ENCODE measurements at regions of chr1 and their contacts with region 1.

Region 1: DNA sequence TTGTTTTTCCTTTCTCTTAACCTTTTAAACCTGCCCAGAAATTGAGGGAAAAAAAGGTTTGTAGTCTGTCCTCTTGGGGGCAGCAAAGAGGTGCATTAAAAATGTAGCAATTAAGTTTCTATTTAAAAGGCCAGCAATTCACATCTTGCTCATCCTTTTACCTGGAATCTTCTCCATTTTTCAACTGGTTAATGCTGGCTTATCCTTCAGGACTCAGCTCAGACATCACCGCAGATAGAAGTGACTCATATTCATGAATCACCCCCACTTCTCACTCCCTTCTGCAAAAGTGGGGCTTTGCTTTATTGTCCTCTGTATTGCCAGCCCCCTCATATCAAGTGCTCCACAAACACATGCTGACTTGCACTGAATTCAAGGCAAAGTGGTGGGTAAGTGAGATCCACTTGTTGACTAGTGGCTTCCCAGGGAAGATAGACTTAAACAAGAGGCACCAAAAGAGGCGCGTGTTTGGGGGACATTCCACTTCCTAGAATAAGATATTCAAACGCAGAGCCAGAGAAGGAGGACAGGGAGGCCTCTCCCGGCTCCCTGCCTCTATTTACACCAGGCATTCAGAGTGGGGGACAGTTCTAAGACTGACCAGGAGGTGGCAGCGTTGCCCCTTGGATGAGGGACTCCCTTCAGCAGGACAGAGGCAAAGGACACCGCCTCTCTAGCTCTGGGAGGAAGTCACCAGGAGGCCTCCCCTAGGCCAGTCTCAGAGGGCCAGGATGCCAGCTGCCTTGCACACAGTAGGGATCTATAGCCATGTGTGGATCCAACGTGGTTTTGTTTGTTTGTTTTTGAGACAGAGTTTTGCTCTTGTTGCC is 23.2 kb upstream of the ZNF648 start:
- DNase-seq: peak; percentile 90 to 92
- H3K4me3 ChIP-seq: no peak overlapping the region
- H3K27ac ChIP-seq: no peak overlapping the region
- H3K4me1 ChIP-seq: peaks cover 0 to 8% (median 2%) of the 10 kb centered on the region in 4 donors
- H3K27me3 ChIP-seq: no peaks in the 10 kb centered on the region
- CTCF ChIP-seq: peak; percentile 81 to 85

Region 2: DNA sequence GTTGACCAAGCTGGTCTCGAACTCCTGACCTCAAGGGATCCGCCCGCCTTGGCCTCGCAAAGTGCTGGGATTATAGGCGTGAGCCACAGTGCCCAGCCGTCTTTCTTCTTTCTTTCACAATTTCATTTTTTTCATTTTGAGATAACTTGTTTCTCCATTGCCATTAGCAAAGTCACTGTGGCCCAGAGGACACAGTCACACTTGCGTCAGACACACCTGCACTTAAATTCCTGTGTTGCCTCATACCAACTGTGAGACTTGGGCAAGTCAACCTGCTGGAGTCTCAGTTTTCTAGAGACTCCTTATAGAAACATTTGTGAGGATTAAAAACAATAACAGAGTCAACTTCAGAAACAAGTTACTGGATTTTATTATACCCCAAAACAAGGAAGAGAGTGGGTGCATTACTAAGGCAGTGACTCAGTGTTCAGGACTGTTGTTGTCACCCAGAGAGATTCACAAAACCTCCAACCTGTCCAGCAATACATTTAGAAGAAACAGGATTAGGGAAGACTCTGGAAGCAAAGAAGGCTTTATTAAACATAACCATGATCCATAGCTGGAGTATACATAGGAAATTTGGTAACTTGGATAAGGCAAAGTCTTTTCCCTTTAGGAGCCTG is 313.2 kb after region 1 on chr1:
- intact Hi-C with region 1: loop called (anchors 2 kb)
- DNase-seq: no peak
- H3K4me3 ChIP-seq: no peak overlapping the region
- H3K27ac ChIP-seq: no peak overlapping the region
- H3K4me1 ChIP-seq: peaks cover 0 to 19% (median 12%) of the 10 kb centered on the region in 4 donors
- H3K27me3 ChIP-seq: no peaks in the 10 kb centered on the region
- CTCF ChIP-seq: no peak

Region 3: GRCh38 chr1:182588500-182589452 is 504.1 kb after region 1 on chr1 and contains the start of gene RNASEL:
- intact Hi-C with region 1: loop called (anchors 10 kb)
- DNase-seq: peak; percentile 70 to 87
- H3K4me3 ChIP-seq: peak within 1 kb of the TSS; percentile 56 to 75
- H3K27ac ChIP-seq: peak within 1 kb of the TSS; percentile 71 to 85
- H3K4me1 ChIP-seq: peaks cover 0 to 33% (median 3%) of the 10 kb centered on the region in 4 donors
- H3K27me3 ChIP-seq: no peaks in the 10 kb centered on the region
- CTCF ChIP-seq: no peak

Region 4: GRCh38 chr1:182789138-182790076 is 704.7 kb after region 1 on chr1 and contains the start of gene NPL:
- intact Hi-C with region 1: loop called (anchors 10 kb)
- DNase-seq: peak; percentile 71 to 87
- H3K4me3 ChIP-seq: peak within 1 kb of the TSS; percentile 64 to 76
- H3K27ac ChIP-seq: peak within 1 kb of the TSS; percentile 46 to 67
- H3K4me1 ChIP-seq: peaks cover 0 to 14% (median 4%) of the 10 kb centered on the region in 4 donors
- H3K27me3 ChIP-seq: no peaks in the 10 kb centered on the region
- CTCF ChIP-seq: peak in 1 of 2 experiments; percentile 10

Measured in tibial artery (tissue), 4 donors.